Posterior vena cava (tissue), 2 donors: ENCODE measurements at regions of chr1 and their contacts with region 1.

Region 1: DNA sequence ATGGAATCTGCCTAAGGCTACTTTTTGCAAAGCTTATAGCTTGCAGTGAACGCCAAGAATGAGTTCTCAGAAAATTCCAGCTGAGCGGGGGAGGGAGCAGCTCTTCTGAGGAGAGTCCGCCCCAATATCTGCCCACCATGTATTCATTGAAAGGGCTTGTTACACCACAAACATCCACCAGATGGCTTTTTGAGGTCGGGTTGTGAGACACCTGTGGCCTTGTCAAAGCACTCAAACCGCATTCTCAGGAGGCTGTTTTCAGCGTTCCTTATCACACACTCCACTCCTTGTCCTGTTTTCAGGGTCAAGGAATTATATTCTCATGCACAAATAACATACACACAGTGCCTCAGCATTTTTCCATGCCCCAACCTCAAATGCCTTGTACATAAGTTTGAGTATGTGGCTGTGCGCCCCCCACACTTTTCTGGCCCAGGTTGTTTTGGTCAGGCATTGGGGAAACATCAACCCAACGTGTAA is 3.9 kb upstream of the C4BPB start:
- DNase-seq: no peak

Region 2: GRCh38 chr1:205658943-205659581 is 1425.7 kb before region 1 on chr1:
- intact Hi-C with region 1: no loop called
- DNase-seq: peak; percentile 92

Region 3: GRCh38 chr1:207069858-207070506 is 14.8 kb before region 1 on chr1:
- intact Hi-C with region 1: no loop called
- DNase-seq: no peak

Region 4: DNA sequence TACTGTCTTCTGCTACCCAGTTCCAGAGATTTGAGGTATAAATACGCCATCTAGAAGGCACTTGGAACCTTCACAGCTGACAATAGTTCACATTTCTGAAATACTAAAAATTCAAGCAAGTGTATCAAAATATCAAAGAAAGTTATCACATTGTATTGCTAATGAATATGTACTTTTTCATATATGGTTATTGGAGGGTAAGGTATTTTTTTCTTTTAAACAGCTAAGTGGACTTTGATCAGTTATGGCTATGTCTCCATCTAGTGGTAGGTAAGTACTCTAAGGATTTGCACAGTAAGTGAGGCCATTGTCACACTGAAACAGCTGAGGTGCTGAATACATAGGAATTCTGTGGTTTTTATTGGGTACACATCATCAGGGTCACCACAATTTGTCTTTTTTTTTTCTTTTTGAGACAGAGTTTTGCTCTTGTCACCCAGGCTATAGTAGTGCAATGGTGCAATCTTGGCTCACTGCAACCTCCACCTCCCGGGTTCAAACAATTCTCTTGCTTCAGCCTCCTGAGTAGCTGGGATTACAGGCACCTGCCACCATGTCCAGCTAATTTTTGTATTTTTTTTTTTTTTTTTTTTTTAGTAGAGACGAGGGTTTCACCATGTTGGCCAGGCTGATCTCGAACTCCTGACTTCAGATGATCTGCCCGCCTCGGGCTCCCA is 320.2 kb after region 1 on chr1:
- intact Hi-C with region 1: loop called in 1 of 2 experiments (anchors 5 kb)
- DNase-seq: no peak